Breast epithelium (tissue), 4 donors: ENCODE measurements at regions of chr5 and their contacts with region 1.

Region 1: DNA sequence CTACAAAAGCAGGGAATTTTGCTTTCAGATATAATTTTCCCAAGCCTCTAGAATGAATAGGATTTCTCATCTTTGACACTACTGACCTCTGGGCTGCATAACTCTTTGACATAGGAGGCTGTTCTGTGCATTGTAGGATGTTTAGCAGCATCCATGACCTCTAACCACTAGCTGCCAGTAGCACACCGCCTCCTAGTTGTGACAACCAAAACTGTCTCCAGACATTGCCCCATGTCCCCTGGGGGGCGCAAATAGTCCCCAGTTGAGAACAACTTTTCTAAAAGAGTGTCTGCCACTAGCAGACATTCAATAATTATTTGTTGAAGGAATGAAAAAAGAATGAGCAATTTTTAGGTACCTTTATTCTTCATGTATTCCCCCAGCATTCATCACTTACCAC is 51.8 kb downstream of the POU4F3 start:
- DNase-seq: no peak
- H3K4me3 ChIP-seq: no peak overlapping the region
- H3K27ac ChIP-seq: no peak overlapping the region
- H3K4me1 ChIP-seq: no peaks in the 10 kb centered on the region
- H3K27me3 ChIP-seq: peaks cover 0 to 5% of the 10 kb centered on the region in 2 donors
- CTCF ChIP-seq: no peak
- POLR2A ChIP-seq: no peak

Region 2: GRCh38 chr5:145681686-145682085 is 708.8 kb before region 1 on chr5:
- intact Hi-C with region 1: no loop called
- DNase-seq: peak in 1 of 2 donors; percentile 22
- H3K4me3 ChIP-seq: no peak overlapping the region
- H3K27ac ChIP-seq: no peak overlapping the region
- H3K4me1 ChIP-seq: no peaks in the 10 kb centered on the region
- H3K27me3 ChIP-seq: no peaks in the 10 kb centered on the region
- CTCF ChIP-seq: peak in 2 of 3 donors; percentile 63 to 65
- POLR2A ChIP-seq: no peak

Region 3: DNA sequence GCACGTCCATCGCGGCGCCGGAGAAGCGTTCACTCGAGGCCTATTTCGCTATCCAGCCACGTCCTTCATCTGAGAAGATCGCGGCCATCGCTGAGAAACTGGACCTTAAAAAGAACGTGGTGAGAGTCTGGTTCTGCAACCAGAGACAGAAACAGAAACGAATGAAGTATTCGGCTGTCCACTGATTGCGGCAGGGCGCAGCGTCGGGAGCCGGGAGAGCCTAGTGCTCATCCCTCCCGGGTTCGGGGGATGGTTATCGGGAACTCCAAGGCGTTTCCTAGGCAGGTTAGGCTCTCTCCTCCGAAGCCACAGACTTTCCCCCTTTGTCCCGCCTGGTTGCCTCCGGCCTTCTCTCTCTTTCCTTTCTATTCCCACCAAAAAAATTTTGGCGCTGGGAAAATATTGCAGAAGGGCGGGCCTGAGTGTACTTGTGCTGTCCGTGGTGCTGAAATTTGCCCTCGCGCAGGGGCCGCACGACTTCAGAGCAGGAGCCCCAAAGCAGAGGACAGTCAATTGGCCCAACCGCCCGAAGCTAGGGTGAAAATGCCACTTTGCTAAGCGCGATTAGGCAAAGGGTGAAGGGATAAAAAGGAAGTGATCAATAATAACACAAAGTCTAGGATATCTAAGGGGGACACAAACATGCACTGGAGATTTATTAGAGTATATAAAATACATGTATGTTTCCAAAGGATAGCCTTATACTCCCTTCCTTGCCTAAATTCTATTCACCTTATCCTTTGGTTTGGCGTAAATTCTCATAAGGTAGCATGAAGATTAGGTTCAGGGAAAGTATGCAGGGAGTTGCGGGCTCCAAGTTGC is 50.0 kb before region 1 on chr5:
- intact Hi-C with region 1: no loop called
- DNase-seq: peak; percentile 18 to 63
- H3K4me3 ChIP-seq: peak overlapping the region in 1 of 3 donors; percentile 44
- H3K27ac ChIP-seq: no peak overlapping the region
- H3K4me1 ChIP-seq: no peaks in the 10 kb centered on the region
- H3K27me3 ChIP-seq: peaks cover 0 to 98% of the 10 kb centered on the region in 2 donors
- CTCF ChIP-seq: no peak
- POLR2A ChIP-seq: no peak

Region 4: GRCh38 chr5:146369691-146370090 is 20.8 kb before region 1 on chr5:
- intact Hi-C with region 1: no loop called
- DNase-seq: no peak
- H3K4me3 ChIP-seq: no peak overlapping the region
- H3K27ac ChIP-seq: no peak overlapping the region
- H3K4me1 ChIP-seq: no peaks in the 10 kb centered on the region
- H3K27me3 ChIP-seq: no peaks in the 10 kb centered on the region
- CTCF ChIP-seq: no peak
- POLR2A ChIP-seq: no peak

Region 5: GRCh38 chr5:147613359-147613758 is 1222.9 kb after region 1 on chr5:
- intact Hi-C with region 1: loop called (anchors 5 kb)
- DNase-seq: no peak
- H3K4me3 ChIP-seq: no peak overlapping the region
- H3K27ac ChIP-seq: no peak overlapping the region
- H3K4me1 ChIP-seq: no peaks in the 10 kb centered on the region
- H3K27me3 ChIP-seq: no peaks in the 10 kb centered on the region
- CTCF ChIP-seq: no peak
- POLR2A ChIP-seq: no peak